ENCODE measurements at regions of chr11 and their contacts with region 1.

Region 1: DNA sequence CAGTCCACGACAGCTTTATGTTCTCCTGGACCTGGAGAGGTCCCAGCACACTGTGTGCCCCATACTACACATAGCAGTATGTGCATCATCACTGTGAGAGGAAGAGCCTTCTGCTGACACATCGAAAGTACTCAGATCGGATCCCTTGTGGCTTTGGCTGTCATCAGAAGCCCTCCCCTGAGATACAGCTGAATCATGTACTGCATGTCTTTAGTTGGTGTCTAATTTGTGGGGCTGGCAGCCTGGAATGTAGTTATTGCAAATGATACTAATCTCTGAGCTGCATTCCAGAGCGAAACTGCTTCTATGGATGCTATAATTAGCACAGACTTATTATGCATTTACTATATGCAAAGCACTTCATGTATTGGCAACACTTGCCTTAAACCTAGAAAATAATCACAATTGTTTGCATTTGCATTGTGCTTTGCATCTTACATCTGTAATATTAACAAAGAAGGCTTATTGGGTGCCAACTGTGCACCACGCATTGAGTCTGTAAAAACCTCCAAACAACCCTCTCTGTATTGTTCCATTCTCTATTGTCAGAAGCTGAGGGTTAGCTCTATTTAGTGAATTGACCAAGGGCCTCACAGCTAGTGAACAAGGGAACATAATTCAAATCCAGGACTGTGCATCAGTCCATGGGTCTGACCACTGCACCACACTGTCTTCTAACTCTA is 89.2 kb upstream of the CRTAM start:
- DNase-seq: peak; percentile 79
- H3K4me3 Mint-ChIP-seq: peak overlapping the region; percentile 11
- H3K27ac Mint-ChIP-seq: peak overlapping the region; percentile 68
- H3K4me1 Mint-ChIP-seq: peaks cover 21% of the 10 kb centered on the region
- H3K27me3 Mint-ChIP-seq: no peaks in the 10 kb centered on the region

Region 2: DNA sequence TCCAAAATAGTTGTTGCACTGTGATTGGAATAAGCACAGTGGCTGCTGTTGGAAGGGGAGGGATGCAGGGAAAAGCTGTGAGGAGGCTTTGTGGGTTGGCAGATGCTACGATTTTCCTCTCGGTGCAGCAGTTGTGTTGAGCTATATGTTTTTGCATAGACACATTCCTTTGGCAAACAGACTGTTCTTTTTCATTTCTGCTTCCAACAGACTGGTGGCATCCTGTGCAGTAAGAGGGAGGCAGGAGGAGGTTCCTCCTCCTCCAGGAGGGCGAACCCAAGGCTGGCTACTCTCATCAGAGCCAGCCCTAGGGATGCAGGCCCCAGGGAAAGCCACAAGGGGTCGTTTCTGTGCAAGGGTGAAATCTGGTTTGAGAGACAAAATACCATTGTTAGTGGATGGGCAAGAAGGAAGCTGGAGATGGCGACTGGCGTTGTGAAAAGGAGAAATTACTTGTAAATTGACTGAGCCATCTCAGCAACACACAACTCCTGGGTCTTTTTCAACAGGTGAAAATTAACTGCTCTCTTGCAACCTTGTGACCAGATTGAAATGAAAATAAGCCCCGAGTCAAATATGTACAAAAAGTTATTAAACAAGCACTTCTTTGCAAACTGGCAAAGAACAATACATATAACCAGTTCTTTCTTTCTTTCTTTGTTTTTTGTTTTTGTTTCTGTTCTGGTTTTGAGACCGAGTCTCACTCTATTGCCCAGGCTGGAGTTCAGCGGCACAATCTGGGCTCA is 120.2 kb before region 1 on chr11:
- CTCF ChIA-PET with region 1: interaction called, 102 read pairs
- POLR2A ChIA-PET with region 1: interaction called, 8 read pairs
- DNase-seq: peak; percentile 67
- H3K4me3 Mint-ChIP-seq: no peak overlapping the region
- H3K27ac Mint-ChIP-seq: no peak overlapping the region
- H3K4me1 Mint-ChIP-seq: peaks cover 5% of the 10 kb centered on the region
- H3K27me3 Mint-ChIP-seq: peaks cover 9% of the 10 kb centered on the region

Region 3: GRCh38 chr11:122721964-122722266 is 27.2 kb before region 1 on chr11:
- CTCF ChIA-PET with region 1: interaction called, 21 read pairs
- POLR2A ChIA-PET with region 1: interaction called, 66 read pairs
- DNase-seq: no peak
- H3K4me3 Mint-ChIP-seq: no peak overlapping the region
- H3K27ac Mint-ChIP-seq: peak overlapping the region; percentile 42
- H3K4me1 Mint-ChIP-seq: peaks cover 82% of the 10 kb centered on the region
- H3K27me3 Mint-ChIP-seq: peaks cover 5% of the 10 kb centered on the region

Region 4: GRCh38 chr11:122727101-122727929 is 21.8 kb before region 1 on chr11:
- CTCF ChIA-PET with region 1: interaction called, 21 read pairs
- POLR2A ChIA-PET with region 1: interaction called, 66 read pairs
- DNase-seq: peak; percentile 59
- H3K4me3 Mint-ChIP-seq: peak overlapping the region; percentile 60
- H3K27ac Mint-ChIP-seq: peak overlapping the region; percentile 90
- H3K4me1 Mint-ChIP-seq: peaks cover 68% of the 10 kb centered on the region
- H3K27me3 Mint-ChIP-seq: no peaks in the 10 kb centered on the region

Measured in activated CD4-positive, alpha-beta memory T cell treated with anti-CD3 and anti-CD28 coated beads, Interleukin-2, amount 10 ng/mL, durations not matched to agents 7 days and 5 days (primary cell).